ENCODE measurements at regions of chr16 and their contacts with region 1.

Region 1: DNA sequence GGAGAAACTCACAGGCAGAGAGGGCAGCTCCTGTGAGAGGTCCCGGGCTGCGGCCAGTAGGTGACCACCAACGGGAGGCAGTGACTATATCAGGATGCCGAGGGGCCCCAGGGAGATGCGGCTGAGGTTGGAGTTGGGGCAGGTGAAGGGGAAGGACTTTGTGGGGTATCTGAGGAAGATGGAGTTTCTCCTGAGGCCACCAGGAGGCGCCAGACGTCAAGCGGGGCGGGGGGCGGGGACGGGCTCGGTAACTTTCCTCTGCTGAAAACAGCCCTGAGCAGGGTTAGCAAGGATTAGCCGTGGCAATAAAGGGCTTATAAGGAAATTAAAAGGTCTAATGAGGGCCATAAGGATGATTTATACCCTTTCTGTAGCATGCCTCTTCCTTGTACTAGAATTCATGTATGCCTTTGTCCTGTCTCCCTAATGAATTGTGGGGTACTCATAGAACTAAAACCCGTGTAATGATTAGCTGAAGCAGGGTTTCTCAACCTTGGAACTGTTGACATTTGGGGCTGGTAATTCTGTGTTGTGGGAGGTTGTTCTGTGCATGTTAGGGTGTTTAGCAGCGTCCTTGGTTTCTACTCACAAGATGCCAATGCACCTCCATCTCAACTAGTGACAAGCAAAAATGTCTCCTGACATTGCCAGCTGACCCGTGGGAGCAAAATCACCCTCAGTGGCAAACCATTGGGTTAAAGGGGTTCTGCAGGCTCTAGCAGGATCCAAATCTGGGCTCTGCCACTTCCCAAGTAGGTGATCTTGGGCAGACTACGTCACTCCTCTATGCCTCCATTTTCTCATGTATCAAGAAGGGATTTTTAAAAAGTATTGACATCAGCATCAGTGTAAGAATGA is 74.8 kb upstream of the GRIN2A start:
- H3K4me3 Mint-ChIP-seq: no peak overlapping the region
- H3K27ac Mint-ChIP-seq: no peak overlapping the region
- H3K4me1 Mint-ChIP-seq: peaks cover 10% of the 10 kb centered on the region
- H3K27me3 Mint-ChIP-seq: peaks cover 2% of the 10 kb centered on the region

Region 2: GRCh38 chr16:10210944-10211343 is 46.1 kb before region 1 on chr16:
- intact Hi-C with region 1: no loop called
- H3K4me3 Mint-ChIP-seq: no peak overlapping the region
- H3K27ac Mint-ChIP-seq: no peak overlapping the region
- H3K4me1 Mint-ChIP-seq: no peaks in the 10 kb centered on the region
- H3K27me3 Mint-ChIP-seq: no peaks in the 10 kb centered on the region

Region 3: DNA sequence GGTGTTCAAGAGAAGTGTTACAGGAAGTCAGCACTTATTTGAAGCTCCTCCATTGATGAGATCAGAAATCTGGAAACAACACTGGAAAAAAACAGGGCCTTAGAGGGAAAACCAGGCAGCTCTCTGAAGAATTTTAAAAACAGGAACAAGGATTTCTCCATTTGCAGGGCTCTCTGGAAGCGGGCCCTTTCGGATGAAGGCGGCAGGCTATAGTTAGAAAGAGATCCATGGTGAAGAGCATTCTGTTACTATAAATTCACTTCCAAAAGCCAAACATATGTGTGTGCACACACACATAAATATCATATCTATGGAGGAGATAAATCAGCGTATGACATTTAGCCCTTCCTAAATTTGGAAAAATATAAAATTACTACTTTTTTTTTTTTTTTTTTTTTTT is 32.2 kb before region 1 on chr16:
- intact Hi-C with region 1: no loop called
- H3K4me3 Mint-ChIP-seq: no peak overlapping the region
- H3K27ac Mint-ChIP-seq: no peak overlapping the region
- H3K4me1 Mint-ChIP-seq: peaks cover 6% of the 10 kb centered on the region
- H3K27me3 Mint-ChIP-seq: peaks cover 2% of the 10 kb centered on the region

Region 4: DNA sequence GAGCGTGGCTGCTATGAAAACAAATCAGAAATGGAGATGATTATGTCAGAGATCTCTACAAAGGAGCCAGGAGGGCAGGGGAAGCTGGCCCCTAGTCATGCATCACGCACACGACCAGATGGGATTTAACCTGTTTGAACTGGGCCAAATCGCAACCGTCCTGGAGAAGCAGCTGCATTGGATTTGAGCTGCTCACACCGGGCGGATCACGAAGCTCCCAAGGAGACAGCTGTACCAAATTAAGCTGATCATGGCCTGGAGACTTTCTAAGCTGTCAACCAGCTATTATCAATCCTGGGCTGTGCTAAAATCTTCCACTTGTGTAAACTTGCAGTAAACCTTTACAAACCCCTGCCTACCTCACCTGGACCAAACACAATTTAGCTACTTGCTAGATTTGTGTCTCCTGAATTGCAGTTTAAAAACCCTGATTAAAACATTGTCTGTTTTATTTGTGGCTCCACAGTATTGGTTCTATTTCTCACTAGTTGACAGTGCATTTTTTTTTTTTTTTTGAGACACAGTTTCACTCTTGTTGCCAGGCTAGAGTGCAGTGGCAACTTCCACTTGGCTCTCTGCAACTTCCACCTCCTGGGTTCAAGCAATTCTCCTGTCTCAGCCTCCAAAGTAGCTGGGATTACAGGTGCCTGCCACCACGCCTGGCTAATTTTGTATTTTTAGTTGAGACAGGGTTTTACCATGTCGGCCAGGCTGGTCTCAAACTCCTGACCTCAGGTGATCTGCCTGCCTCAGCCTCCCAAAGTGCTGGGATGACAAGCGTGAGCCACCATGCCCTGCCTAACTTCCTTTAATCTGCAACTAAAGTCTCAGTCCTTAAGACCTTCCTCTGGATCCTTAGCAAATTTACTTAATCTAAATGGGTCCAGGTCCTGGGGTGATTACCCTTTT is 23.5 kb after region 1 on chr16:
- intact Hi-C with region 1: no loop called
- H3K4me3 Mint-ChIP-seq: no peak overlapping the region
- H3K27ac Mint-ChIP-seq: no peak overlapping the region
- H3K4me1 Mint-ChIP-seq: peaks cover 7% of the 10 kb centered on the region
- H3K27me3 Mint-ChIP-seq: no peaks in the 10 kb centered on the region

Region 5: GRCh38 chr16:10737068-10737625 is 480.1 kb after region 1 on chr16:
- intact Hi-C with region 1: loop called (anchors 5 kb)
- H3K4me3 Mint-ChIP-seq: peak overlapping the region; percentile 66
- H3K27ac Mint-ChIP-seq: peak overlapping the region; percentile 76
- H3K4me1 Mint-ChIP-seq: peaks cover 37% of the 10 kb centered on the region
- H3K27me3 Mint-ChIP-seq: no peaks in the 10 kb centered on the region